Activated T-helper 1 cell treated with anti-CD3 and anti-CD28 coated beads, Interleukin-12 subunit alpha, Interleukin-12 subunit beta, Interleukin-2, Interleukin-4 antibody, amounts not matched to agents 30 ng/mL and 10 ng/mL and 1 ng/mL, durations not matched to agents 14 hours and 24 hours and 36 hours (primary cell): ENCODE measurements at regions of chr15 and their contacts with region 1.

Region 1: GRCh38 chr15:90560229-90560776 is 30.6 kb downstream of the CRTC3 start:
- DNase-seq: no peak
- H3K4me3 Mint-ChIP-seq: no peak overlapping the region
- H3K27ac Mint-ChIP-seq: peak overlapping the region; percentile 9
- H3K4me1 Mint-ChIP-seq: peaks cover 85% of the 10 kb centered on the region
- H3K27me3 Mint-ChIP-seq: no peaks in the 10 kb centered on the region

Region 2: GRCh38 chr15:90519688-90520087 is 40.6 kb before region 1 on chr15:
- intact Hi-C with region 1: no loop called
- DNase-seq: no peak
- H3K4me3 Mint-ChIP-seq: no peak overlapping the region
- H3K27ac Mint-ChIP-seq: no peak overlapping the region
- H3K4me1 Mint-ChIP-seq: peaks cover 25% of the 10 kb centered on the region
- H3K27me3 Mint-ChIP-seq: no peaks in the 10 kb centered on the region

Region 3: DNA sequence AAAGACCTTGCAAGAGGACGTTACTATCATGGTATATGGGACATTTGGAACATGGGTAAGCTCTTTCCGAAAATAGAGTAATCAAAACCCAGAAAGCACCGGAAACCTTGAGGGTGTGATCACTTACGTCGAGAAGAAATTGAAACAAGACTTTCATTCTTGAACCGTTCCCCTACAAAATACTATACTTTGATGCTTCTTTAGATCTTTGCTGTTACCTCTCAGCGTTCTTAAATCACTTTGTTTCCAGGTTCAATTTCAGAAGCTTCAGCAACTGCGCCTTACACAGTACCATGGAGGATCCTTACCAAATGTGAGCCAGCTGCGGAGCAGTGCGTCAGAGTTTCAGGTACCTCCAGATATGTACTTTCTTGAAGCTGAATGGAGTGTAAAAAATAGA is 20.5 kb before region 1 on chr15:
- intact Hi-C with region 1: loop called (anchors 2 kb)
- DNase-seq: no peak
- H3K4me3 Mint-ChIP-seq: peak overlapping the region; percentile 88
- H3K27ac Mint-ChIP-seq: peak overlapping the region; percentile 97
- H3K4me1 Mint-ChIP-seq: peaks cover 81% of the 10 kb centered on the region
- H3K27me3 Mint-ChIP-seq: no peaks in the 10 kb centered on the region

Region 4: DNA sequence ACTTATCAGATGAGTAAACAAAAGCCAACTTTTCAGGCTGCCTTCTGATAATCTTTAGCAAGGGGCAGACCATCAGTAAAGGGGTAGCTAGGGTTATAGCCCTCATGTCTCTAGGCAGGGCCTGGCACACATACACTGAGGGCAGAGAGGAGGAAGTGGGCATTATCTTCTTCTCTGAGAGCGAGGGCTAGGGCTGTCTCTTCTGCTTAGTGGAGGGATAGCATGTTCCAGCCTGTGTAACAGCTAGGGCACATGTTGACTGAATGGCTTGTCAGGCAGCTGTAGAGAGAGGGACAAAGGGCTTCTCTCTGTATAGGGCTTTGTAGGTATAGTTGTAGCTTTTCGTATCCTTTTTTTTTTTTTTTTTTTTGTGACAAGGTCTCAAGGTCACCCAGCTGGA is 12.8 kb before region 1 on chr15:
- intact Hi-C with region 1: loop called (anchors 2 kb)
- DNase-seq: no peak
- H3K4me3 Mint-ChIP-seq: no peak overlapping the region
- H3K27ac Mint-ChIP-seq: peak overlapping the region; percentile 26
- H3K4me1 Mint-ChIP-seq: peaks cover 62% of the 10 kb centered on the region
- H3K27me3 Mint-ChIP-seq: no peaks in the 10 kb centered on the region

Region 5: DNA sequence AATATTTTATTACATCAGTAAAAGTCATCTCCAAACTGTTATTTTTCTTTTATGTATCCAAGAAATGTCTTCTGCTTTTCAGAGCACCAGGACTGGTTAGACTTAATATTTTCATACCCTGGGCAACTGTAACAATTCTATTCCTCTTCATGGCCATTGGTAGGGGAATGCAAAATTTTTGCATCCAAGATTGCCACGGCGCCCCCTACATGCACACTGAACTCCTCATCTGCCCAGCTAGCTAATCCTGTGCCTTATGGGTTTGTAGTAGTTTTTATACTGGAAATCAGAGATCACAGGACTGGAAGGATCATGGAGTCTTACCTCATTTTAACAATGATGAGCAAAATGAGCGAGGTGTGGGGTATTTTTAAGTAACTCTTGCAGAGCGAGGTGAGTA is 43.6 kb after region 1 on chr15:
- intact Hi-C with region 1: no loop called
- DNase-seq: peak; percentile 28
- H3K4me3 Mint-ChIP-seq: no peak overlapping the region
- H3K27ac Mint-ChIP-seq: peak overlapping the region; percentile 67
- H3K4me1 Mint-ChIP-seq: peaks cover 49% of the 10 kb centered on the region
- H3K27me3 Mint-ChIP-seq: no peaks in the 10 kb centered on the region

Region 6: DNA sequence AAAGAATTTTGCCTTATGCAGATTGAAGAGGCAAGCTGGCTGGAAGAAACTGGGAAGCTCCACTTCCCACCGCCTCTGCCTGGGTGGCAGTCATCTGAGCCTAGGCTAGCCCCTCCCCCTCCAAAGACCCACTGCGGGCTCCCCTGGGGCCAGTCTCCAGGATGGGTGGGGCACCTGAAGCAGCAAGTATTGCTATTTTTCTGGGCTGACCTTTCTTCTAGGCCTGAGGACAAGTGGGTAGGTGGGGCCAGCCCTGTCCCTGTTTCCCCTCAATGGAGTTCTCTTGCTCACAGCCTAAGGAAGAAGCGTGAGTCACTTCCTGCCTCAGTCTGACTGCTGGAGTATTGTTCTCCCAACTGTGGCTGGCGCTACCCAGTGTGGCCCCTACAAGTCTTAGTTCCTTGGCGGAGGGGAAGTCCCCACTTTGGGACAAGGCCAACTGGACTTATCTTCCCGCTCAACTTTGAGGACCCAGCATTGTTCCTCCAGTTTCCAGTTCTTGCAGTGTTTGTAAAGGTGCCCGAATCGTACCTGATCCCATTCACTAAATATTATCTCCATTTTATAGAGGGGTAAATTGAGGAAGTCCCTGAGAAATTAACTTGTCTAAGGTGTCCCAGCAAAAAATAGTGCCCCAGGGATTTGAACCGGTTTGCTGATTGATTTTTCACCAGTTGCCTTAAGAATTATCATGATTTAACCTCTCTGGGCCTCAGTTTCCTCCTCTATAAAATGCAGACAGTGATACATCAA is 309.5 kb after region 1 on chr15:
- intact Hi-C with region 1: no loop called
- DNase-seq: peak; percentile 61
- H3K4me3 Mint-ChIP-seq: peak overlapping the region; percentile 94
- H3K27ac Mint-ChIP-seq: peak overlapping the region; percentile 95
- H3K4me1 Mint-ChIP-seq: peaks cover 62% of the 10 kb centered on the region
- H3K27me3 Mint-ChIP-seq: no peaks in the 10 kb centered on the region